ENCODE measurements at regions of chr7 and their contacts with region 1.

Region 1: DNA sequence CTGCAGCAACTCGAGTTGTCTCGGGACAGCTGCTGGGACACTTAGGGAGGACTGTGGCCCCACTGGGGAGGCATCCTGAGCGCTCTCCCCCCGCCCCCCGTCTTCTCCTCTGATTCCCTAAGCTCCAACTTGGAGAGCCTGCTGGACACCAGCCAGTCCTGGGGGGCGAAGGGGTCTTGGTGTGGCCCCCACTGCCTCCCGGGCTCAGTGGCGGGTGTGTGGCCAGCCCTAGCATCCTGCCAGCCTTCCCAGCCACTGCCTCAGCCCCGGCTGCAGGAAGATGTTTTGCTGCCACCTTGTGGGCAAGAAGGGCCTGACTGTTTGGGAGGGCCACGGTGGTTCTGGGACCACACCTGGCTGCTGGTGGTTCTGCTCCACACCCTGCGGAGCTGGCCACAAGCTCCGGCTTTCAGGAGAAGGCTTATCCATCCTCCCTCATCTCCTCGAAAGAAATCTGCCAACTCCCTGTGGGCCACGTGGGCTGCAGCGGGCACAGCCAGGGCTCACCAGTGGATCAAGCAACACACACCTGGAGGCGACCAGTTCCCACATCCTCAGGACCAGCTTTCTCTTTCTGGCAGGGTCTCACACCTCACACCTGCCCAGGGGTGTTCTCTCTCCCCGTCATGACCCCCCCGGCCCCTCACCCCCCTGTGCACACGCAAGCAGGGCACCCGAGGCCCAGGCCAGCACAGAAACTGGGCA is 24.8 kb downstream of the AGAP3 start:
- DNase-seq: peak; percentile 77
- H3K4me3 ChIP-seq: no peak overlapping the region
- H3K27ac ChIP-seq: no peak overlapping the region
- H3K4me1 ChIP-seq: peaks cover 4% of the 10 kb centered on the region
- H3K27me3 ChIP-seq: no peaks in the 10 kb centered on the region
- CTCF ChIP-seq: peak; percentile 68 to 93 (median 85)
- POLR2A ChIP-seq: no peak

Region 2: DNA sequence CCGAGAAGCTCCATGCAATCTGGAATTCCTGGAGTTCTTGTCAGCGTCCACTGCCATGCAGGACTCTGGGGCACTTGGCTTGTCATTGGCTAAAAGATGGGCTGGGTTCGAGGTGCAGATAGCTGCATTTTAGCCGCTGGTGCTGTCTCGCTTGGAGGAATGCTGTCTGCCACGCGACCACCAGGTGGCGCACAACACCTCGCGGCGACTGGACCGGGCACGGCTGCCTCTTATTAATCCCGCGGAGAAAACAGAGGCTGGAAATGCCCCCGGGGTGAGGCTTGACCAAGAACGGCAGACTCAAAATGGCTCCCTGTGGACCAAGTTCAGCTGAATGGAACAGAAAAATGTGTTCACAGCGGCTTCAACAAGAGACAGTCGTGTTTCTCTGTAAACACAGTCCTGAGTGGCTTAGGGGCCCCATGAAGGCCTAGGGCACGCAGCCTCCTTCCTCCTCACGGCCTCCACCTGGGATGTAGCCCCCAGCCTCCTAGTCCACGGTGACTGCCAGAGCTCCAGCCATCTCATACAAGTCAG is 212.6 kb before region 1 on chr7:
- intact Hi-C with region 1: loop called (anchors 5 kb)
- DNase-seq: peak; percentile 69
- H3K4me3 ChIP-seq: no peak overlapping the region
- H3K27ac ChIP-seq: no peak overlapping the region
- H3K4me1 ChIP-seq: no peaks in the 10 kb centered on the region
- H3K27me3 ChIP-seq: no peaks in the 10 kb centered on the region
- CTCF ChIP-seq: peak; percentile 90 to 95 (median 94)
- POLR2A ChIP-seq: no peak

Region 3: GRCh38 chr7:151028131-151028947 is 82.8 kb before region 1 on chr7 and contains the start of gene ABCB8:
- intact Hi-C with region 1: loop called (anchors 5 kb)
- DNase-seq: peak; percentile 98
- H3K4me3 ChIP-seq: peak within 1 kb of the TSS; percentile 58 to 63
- H3K27ac ChIP-seq: peak within 1 kb of the TSS; percentile 86 to 88
- H3K4me1 ChIP-seq: peaks cover 9% of the 10 kb centered on the region
- H3K27me3 ChIP-seq: no peaks in the 10 kb centered on the region
- CTCF ChIP-seq: peak; percentile 19 to 77 (median 52)
- POLR2A ChIP-seq: peak; percentile 47
- total RNA-seq, gene ABCB8: 26.4 to 50.6 TPM

Region 4: DNA sequence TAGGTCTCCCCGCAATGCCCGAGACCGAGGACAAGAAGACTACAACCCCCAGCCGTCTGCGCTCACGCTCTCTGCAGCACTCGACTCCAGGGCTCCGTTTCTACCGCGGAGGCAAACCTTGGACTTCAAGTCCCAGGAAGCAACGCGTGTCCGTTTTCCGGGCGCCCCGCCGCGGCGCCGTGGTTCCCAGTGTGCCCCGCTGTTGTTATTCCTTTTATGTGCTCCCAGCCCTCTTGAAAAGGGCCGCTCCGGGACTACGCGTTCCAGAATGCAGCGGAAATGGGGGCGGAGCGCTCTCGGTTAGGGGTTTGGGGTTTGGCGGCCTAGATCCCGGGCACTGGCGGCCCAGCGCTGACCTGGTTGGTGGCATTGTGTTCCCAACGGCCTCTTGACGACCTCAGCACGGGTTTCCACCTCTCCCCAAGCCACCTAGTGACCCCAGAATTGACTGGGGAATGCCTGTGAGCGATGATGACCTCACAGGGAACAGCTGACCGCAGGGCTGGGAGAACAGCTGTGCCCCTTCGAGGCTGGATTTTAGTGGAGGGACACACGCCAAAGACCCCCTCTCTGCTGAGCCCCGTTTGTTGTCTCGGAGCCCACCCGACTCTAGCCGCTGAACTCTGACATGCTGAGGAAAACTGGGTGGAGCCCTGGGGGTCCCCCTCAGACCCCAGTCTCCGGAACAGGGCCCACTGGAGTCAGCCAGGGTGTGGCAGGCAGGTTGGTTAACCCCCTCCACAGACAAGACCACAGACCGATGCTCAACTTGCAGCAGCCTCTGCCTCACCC is 52.9 kb before region 1 on chr7:
- intact Hi-C with region 1: loop called (anchors 5 kb)
- DNase-seq: peak; percentile 100
- H3K4me3 ChIP-seq: peak overlapping the region; percentile 57 to 59
- H3K27ac ChIP-seq: peak overlapping the region; percentile 93 to 97
- H3K4me1 ChIP-seq: peaks cover 29% of the 10 kb centered on the region
- H3K27me3 ChIP-seq: no peaks in the 10 kb centered on the region
- CTCF ChIP-seq: peak in 1 of 4 experiments; percentile 20
- POLR2A ChIP-seq: peak; percentile 98

Region 5: GRCh38 chr7:151137076-151137675 is 26.1 kb after region 1 on chr7:
- intact Hi-C with region 1: no loop called
- DNase-seq: no peak
- H3K4me3 ChIP-seq: no peak overlapping the region
- H3K27ac ChIP-seq: no peak overlapping the region
- H3K4me1 ChIP-seq: no peaks in the 10 kb centered on the region
- H3K27me3 ChIP-seq: no peaks in the 10 kb centered on the region
- CTCF ChIP-seq: no peak
- POLR2A ChIP-seq: no peak